ENCODE measurements at regions of chr22 and their contacts with region 1.

Region 1: DNA sequence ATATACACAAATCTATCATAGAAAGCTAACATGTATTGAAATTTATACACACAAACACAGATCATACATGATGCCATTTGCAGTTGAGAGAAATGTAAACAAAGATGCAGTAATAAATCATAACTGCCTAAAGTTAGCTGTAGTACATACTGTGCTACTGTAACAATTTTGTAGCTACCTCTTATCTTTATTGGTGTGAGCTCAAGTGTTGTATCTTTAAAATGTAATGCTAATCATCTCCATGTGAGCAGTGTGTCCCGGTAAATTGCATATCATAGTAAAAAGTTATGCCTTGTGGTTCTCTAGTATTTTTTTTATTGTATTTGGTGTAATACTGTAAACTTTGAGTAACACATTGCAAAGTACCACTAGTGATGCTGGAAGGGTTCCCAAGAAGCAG is 16.8 kb upstream of the PITPNB start:
- DNase-seq: no peak
- ATAC-seq: no peak
- H3K4me3 ChIP-seq: no peak overlapping the region
- H3K27ac ChIP-seq: no peak overlapping the region
- H3K4me1 ChIP-seq: no peaks in the 10 kb centered on the region
- H3K27me3 ChIP-seq: no peaks in the 10 kb centered on the region
- CTCF ChIP-seq: no peak
- POLR2A ChIP-seq: no peak
- RAD21 ChIP-seq: no peak

Region 2: DNA sequence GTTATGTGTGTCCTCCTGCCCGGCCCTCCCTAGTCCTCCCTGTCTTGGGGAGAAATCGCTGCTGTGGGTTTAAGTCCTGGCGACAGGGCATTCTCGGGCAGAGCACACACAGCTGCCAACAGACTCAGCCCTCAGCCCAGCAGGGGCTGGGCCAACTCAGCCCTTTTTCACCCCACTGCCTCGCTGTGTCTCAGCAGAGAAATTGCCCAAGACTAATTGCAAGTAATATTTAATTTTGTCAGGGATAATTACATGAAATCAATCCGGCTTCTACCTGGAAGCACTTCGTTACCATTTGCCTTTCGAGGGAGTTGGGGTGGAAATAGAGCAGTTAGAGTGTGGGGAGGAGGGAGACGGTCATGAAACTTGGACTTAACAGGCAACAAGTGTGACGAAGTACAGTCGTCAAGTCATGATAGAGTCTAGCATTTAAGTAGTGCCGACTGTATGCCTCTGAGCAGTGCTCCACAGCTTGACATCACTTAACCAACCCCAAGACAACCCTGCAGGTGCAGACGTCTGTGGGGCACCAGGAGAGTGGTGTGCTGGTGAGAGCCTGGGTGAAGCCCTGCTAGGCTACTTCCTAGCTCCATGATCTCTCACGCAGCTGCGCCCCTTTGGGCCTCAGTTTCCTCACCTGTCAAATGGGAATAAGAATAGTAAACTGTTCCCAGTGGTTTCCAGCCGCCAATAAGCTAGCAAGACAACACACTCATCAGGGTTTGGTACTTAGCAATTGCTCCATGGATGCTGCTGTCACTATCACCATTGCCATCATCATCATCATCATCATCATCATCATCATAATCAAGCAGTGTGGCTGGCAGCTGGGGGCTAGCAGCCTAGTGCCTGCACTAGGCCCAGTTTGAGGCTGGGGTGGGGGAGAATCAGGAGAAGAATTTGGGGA is 163.6 kb before region 1 on chr22:
- CTCF ChIA-PET with region 1: no interaction called
- POLR2A ChIA-PET with region 1: no interaction called
- dilution Hi-C with region 1: no loop called
- in situ Hi-C with region 1: no loop called
- intact Hi-C with region 1: no loop called
- DNase-seq: no peak
- ATAC-seq: no peak
- H3K4me3 ChIP-seq: no peak overlapping the region
- H3K27ac ChIP-seq: no peak overlapping the region
- H3K4me1 ChIP-seq: no peaks in the 10 kb centered on the region; the same call in 1 of the 2 replicates
- H3K27me3 ChIP-seq: no peaks in the 10 kb centered on the region
- CTCF ChIP-seq: no peak
- POLR2A ChIP-seq: no peak
- RAD21 ChIP-seq: no peak

Region 3: DNA sequence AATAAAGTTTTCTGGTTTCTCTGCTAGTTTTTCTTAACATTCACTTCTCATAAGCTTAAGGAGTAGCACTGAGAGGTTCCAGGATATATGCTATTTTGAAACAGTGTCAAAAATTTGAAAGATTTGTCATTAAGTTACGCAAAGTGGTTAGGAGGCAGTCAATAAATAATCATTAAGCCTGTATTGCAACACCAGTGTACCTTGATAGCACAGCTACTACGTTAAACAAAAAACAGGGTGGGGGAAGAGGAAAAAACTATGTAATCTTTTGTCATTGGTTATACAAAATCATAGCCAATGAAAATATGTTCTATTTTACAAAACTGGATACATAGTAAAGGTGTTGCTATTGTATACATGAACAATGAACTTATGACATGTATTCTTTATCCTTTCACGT is 13.5 kb after region 1 on chr22:
- CTCF ChIA-PET with region 1: no interaction called
- POLR2A ChIA-PET with region 1: no interaction called
- dilution Hi-C with region 1: no loop called
- in situ Hi-C with region 1: no loop called
- intact Hi-C with region 1: loop called (anchors 2 kb)
- DNase-seq: no peak
- ATAC-seq: no peak
- H3K4me3 ChIP-seq: no peak overlapping the region
- H3K27ac ChIP-seq: no peak overlapping the region
- H3K4me1 ChIP-seq: peaks cover 3% of the 10 kb centered on the region
- H3K27me3 ChIP-seq: no peaks in the 10 kb centered on the region
- CTCF ChIP-seq: no peak
- POLR2A ChIP-seq: no peak
- RAD21 ChIP-seq: no peak